IMR-90 (cell line): ENCODE measurements at regions of chr20 and their contacts with region 1.

Region 1: DNA sequence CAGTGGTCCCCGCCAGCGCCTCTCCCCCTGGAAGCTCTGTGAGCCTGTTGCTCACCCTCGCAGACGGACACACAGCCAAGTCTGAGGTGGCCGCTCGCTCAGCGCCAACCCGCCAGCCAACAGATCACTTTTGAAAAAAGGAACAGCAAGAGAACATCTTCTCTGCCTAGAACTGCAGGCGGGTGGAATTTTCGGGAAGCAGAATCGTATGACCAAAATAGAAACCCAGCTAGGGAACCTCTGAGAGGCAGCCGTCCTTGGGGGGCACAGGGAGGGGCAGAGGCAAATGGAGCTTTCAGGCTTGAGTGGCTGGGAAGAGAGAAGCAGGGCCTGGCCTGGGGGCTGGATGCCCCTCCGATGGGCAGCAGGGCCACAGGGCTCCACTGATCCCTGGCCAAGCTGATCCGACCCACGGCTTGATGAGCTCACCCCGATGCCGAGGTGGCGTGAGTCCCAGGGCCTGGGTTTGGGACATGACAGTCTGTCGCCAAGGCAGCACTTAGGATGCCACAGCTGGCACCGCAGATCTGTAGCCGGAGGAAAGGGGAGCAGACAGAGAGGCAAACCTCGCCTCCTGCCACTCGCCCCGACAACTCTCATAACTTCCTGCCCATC is 9.8 kb downstream of the NFATC2 start:
- DNase-seq: peak; percentile 45
- ATAC-seq: no peak
- H3K4me3 ChIP-seq: no peak overlapping the region
- H3K27ac ChIP-seq: peak overlapping the region; percentile 1; the same call in 1 of the 2 replicates
- H3K4me1 ChIP-seq: peaks cover 21% of the 10 kb centered on the region
- H3K27me3 ChIP-seq: no peaks in the 10 kb centered on the region
- CTCF ChIP-seq: no peak
- POLR2A ChIP-seq: no peak
- RAD21 ChIP-seq: no peak

Region 2: DNA sequence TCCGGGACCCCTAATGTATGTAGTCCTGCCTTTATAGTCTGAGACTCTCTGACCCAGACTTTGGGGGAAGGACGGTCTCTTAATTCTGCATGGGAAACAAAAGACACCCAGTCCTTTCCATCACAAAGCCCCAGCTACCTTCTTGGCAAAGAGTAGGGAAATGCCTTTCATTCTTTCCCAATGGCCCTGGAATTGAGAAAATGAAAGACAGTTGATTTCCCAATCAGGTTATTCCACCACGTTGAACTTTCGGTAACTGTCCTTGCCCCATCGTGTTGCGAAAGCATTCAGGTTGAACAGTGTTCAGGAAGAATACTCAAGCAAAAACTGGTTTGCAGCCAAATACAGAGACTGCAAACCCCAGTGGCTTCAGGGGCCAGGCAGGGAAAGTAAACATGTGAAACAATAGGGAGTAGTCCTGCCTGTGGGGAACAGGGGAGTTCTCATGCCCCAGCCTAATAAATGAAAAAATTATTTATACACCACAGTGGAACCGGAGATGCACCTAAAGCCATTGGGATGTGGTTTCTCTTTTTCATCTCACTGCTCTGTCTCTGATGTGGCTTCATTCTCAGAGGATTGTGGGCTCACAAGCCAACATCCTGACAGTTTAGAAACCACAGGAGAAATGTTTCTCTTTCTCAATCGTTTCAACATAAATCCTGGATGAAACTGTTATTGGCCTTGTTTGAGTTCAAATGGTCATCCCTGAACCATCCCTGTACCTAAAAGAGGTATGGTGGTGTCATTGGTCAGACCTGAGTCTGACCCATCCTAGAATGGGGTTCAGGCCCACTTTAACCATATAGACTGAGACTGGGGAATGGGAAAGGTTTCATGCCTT is 1764.3 kb before region 1 on chr20:
- CTCF ChIA-PET with region 1: no interaction called
- POLR2A ChIA-PET with region 1: no interaction called
- dilution Hi-C with region 1: no loop called
- in situ Hi-C with region 1: no loop called
- intact Hi-C with region 1: no loop called
- DNase-seq: peak; percentile 70
- ATAC-seq: peak; percentile 66
- H3K4me3 ChIP-seq: no peak overlapping the region
- H3K27ac ChIP-seq: peak overlapping the region; percentile 79; the same call in 1 of the 2 replicates
- H3K4me1 ChIP-seq: peaks cover 9% of the 10 kb centered on the region
- H3K27me3 ChIP-seq: no peaks in the 10 kb centered on the region
- CTCF ChIP-seq: no peak
- POLR2A ChIP-seq: no peak
- RAD21 ChIP-seq: no peak

Region 3: GRCh38 chr20:51462566-51463276 is 70.0 kb before region 1 on chr20:
- CTCF ChIA-PET with region 1: no interaction called
- POLR2A ChIA-PET with region 1: no interaction called
- dilution Hi-C with region 1: no loop called
- in situ Hi-C with region 1: no loop called
- intact Hi-C with region 1: loop called (anchors 1 kb)
- DNase-seq: peak; percentile 80
- ATAC-seq: peak; percentile 94
- H3K4me3 ChIP-seq: no peak overlapping the region
- H3K27ac ChIP-seq: 0 out of 2 replicates have a peak overlapping the region, but pooled peaks have one; percentile 23
- H3K4me1 ChIP-seq: peaks cover 9% of the 10 kb centered on the region
- H3K27me3 ChIP-seq: no peaks in the 10 kb centered on the region
- CTCF ChIP-seq: no peak
- POLR2A ChIP-seq: no peak
- RAD21 ChIP-seq: no peak

Region 4: DNA sequence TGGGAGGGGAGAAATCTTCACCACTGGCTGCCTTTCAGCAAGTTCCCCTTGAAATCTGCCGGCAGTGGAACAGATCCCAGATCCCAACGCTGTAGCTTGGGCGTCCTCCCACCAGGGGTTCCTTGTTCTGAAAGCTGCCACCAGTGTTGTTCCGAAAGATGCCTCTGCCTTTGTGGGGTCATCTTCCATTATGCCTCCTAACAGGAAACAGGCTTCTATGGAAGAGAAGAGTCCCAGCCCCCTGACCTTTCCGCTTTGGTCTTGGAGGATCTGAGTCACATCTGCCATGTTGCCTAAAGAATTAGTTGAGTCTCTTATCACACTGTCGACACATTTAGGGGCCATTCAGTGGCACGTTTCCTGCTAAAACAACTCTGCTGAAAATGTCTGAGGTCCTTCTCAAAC is 67.3 kb after region 1 on chr20:
- CTCF ChIA-PET with region 1: no interaction called
- POLR2A ChIA-PET with region 1: no interaction called
- dilution Hi-C with region 1: no loop called
- in situ Hi-C with region 1: no loop called
- intact Hi-C with region 1: no loop called
- DNase-seq: no peak
- ATAC-seq: no peak
- H3K4me3 ChIP-seq: no peak overlapping the region
- H3K27ac ChIP-seq: no peak overlapping the region
- H3K4me1 ChIP-seq: no peaks in the 10 kb centered on the region
- H3K27me3 ChIP-seq: no peaks in the 10 kb centered on the region
- CTCF ChIP-seq: no peak
- POLR2A ChIP-seq: no peak
- RAD21 ChIP-seq: no peak